GM12878 (cell line): ENCODE measurements at regions of chr7 and their contacts with region 1.

Region 1: DNA sequence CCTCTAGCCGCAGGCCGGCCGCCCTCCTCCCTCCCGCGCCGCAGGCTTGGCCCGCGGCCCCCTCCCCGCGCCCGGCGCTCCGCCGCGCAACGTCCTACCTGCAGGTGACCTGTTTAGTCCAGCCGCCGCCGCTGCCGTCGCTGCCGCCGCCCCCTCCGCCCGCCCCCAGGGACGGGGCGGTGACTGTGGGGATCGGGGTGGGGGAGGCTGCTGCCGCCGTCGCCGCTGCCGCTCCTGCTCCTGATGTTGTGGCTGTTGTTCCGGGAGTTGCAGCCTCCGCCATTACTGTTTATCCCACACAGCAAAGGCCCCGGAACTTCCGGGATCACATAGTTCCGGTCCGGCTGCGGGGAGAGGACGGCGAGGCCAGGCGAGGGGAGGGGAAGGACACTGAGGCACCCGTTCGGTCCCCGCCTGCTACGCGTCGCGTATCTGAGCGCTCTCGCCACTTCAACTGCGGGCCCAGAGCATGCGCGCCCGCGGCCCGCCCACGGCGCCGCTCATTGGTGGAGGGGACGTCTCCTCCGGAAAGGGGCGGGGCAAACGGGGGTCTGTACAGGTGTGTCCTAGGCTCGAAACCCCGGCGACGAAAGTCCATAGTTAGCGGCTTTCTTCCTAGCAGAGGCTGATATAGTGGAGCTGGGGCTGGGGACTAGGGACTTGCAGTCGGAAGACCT is at the start of gene MKRN1:
- DNase-seq: peak; percentile 83
- ATAC-seq: peak; percentile 96
- H3K4me3 ChIP-seq: peak within 1 kb of the TSS; percentile 98
- H3K27ac ChIP-seq: peak within 1 kb of the TSS; percentile 76
- H3K4me1 ChIP-seq: peaks cover 13% of the 10 kb centered on the region
- H3K27me3 ChIP-seq: no peaks in the 10 kb centered on the region; a peak in 1 of 4 replicates
- CTCF ChIP-seq: no peak
- EP300 ChIP-seq: no peak
- POLR2A ChIP-seq: peak; percentile 85
- RAD21 ChIP-seq: no peak
- polyA plus RNA-seq, gene MKRN1: 19.1 to 23.8 TPM

Region 2: DNA sequence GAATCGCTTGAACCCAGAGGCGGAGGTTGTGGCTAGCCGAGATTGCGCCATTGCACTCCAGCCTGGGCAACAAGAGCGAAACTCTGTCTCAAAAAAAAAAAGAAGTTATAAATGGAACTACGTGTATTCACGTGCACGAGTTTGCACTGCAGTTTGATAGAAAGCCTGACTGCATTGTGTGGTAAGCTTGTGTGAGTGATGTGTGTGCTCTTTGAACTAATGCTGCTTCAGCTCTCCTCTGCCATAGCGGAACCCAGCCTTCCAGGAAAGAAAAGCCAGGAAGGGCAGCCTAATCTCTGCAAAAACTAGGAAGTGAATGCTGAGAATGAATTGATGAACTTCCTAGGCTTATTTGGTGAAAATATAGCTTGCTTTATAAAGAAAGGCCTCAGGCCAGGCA is 15.7 kb after region 1 on chr7:
- CTCF ChIA-PET with region 1: interaction called, 67 read pairs
- POLR2A ChIA-PET with region 1: interaction called, 3 read pairs
- RAD21 ChIA-PET with region 1: interaction called, 8 read pairs
- SMC1A ChIA-PET with region 1: interaction called, 27 read pairs
- in situ Hi-C with region 1: no loop called
- intact Hi-C with region 1: loop called (anchors 1 kb)
- DNase-seq: no peak
- ATAC-seq: no peak
- H3K4me3 ChIP-seq: no peak overlapping the region
- H3K27ac ChIP-seq: no peak overlapping the region
- H3K4me1 ChIP-seq: no peaks in the 10 kb centered on the region
- H3K27me3 ChIP-seq: no peaks in the 10 kb centered on the region
- CTCF ChIP-seq: no peak
- EP300 ChIP-seq: no peak
- POLR2A ChIP-seq: no peak
- RAD21 ChIP-seq: no peak

Region 3: GRCh38 chr7:140596519-140597427 is 117.6 kb after region 1 on chr7:
- CTCF ChIA-PET with region 1: no interaction called
- POLR2A ChIA-PET with region 1: no interaction called
- RAD21 ChIA-PET with region 1: no interaction called
- SMC1A ChIA-PET with region 1: no interaction called
- in situ Hi-C with region 1: no loop called
- intact Hi-C with region 1: no loop called
- DNase-seq: no peak
- ATAC-seq: no peak
- H3K4me3 ChIP-seq: no peak overlapping the region
- H3K27ac ChIP-seq: no peak overlapping the region
- H3K4me1 ChIP-seq: no peaks in the 10 kb centered on the region
- H3K27me3 ChIP-seq: no peaks in the 10 kb centered on the region; a peak in 1 of 4 replicates
- CTCF ChIP-seq: no peak
- EP300 ChIP-seq: no peak
- POLR2A ChIP-seq: no peak
- RAD21 ChIP-seq: no peak

Region 4: DNA sequence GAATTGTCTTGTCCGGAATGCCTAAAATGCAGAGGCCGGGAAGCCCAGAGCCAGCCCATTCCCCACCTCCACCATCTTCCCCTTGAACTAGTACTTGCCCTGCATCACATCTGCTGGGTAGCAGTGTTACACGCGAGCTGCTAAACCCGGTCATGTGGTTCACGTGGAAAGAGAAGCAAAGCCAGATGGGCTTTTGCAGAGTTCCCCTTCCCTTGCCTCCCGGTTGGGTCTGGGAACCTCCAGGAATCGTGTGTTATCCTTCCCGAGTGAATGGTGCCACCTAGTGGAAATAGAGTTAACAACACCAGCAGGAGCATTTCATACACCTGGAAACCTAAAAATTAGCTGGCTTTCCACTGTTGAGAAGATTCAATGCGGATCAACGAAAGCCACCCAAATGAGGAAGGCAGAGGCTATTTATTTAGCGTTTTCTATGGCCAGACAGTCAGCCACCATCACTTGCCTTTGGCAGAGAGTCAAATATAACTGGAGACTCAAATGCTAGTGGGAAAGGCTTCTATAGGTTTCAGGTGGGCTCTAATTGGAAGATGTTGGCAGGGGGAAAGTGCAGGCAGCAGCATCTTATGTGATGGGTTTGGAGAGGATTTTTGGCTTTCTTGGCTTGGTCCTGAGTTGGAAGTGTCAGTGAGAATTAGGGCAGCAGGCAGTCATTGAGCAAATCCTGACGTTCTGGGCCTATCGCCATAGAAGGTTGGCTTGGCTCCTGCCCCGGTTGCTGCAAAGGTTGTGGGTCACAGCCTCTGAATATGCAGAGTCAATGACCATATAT is 174.3 kb after region 1 on chr7:
- CTCF ChIA-PET with region 1: interaction called, 6 read pairs
- POLR2A ChIA-PET with region 1: no interaction called
- RAD21 ChIA-PET with region 1: interaction called, 13 read pairs
- SMC1A ChIA-PET with region 1: interaction called, 16 read pairs
- in situ Hi-C with region 1: no loop called
- intact Hi-C with region 1: loop called (anchors 1 kb)
- DNase-seq: no peak
- ATAC-seq: peak; percentile 61
- H3K4me3 ChIP-seq: no peak overlapping the region
- H3K27ac ChIP-seq: no peak overlapping the region
- H3K4me1 ChIP-seq: peaks cover 12% of the 10 kb centered on the region
- H3K27me3 ChIP-seq: no peaks in the 10 kb centered on the region
- CTCF ChIP-seq: peak; percentile 79 to 88 (median 81)
- EP300 ChIP-seq: no peak
- POLR2A ChIP-seq: no peak
- RAD21 ChIP-seq: peak; percentile 90